ENCODE measurements at regions of chr17 and their contacts with region 1.

Region 1: DNA sequence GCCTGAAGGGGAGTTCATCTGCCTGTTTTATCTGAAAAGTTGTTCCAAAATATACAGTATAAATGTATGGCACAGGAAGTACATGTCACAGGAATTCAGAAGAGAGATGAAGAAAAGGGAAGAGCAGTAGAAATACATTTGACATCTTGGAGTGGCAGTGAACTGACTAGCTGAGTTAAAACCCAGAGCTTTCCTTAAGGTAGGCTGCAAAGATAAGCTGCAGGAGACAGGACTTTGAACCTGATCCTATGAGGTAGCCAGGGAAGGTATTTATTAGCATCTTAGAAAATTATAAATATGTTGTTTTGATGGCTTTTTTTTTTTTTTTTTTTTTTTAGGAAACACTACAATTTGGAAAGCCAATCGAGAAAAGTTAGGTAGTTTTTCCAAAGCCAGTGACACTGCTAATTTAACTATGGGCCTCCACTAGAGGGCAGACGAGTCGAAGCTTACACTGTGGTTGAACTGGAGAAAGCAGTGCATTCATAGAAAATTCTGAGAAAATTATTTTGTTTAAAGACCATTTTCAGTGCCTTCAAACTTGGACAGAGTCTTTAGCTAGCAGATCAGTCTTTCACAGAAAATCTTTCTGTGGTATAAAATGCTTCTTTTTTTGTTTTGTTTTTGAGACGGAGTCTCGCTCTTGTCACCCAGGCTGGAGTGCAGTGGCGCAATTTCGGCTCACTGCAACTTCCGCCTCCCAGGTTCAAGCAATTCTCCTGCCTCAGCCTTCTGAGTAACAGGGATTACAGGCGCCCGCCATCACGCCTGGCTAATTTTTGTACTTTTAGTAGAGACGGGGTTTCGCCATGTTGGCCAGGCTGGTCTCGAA is 122.3 kb downstream of the SSH2 start:
- DNase-seq: peak in 1 of 2 donors; percentile 64
- H3K4me3 ChIP-seq: no peak overlapping the region
- H3K27ac ChIP-seq: no peak overlapping the region
- H3K4me1 ChIP-seq: no peaks in the 10 kb centered on the region
- H3K27me3 ChIP-seq: no peaks in the 10 kb centered on the region
- CTCF ChIP-seq: peak; percentile 65 to 77

Region 2: GRCh38 chr17:29710891-29711418 is 96.8 kb before region 1 on chr17:
- intact Hi-C with region 1: no loop called
- DNase-seq: peak in 1 of 2 donors; percentile 28
- H3K4me3 ChIP-seq: no peak overlapping the region
- H3K27ac ChIP-seq: peak overlapping the region in 1 of 2 donors; percentile 19
- H3K4me1 ChIP-seq: peaks cover 0 to 19% (median 4%) of the 10 kb centered on the region in 4 donors
- H3K27me3 ChIP-seq: no peaks in the 10 kb centered on the region
- CTCF ChIP-seq: no peak

Region 3: DNA sequence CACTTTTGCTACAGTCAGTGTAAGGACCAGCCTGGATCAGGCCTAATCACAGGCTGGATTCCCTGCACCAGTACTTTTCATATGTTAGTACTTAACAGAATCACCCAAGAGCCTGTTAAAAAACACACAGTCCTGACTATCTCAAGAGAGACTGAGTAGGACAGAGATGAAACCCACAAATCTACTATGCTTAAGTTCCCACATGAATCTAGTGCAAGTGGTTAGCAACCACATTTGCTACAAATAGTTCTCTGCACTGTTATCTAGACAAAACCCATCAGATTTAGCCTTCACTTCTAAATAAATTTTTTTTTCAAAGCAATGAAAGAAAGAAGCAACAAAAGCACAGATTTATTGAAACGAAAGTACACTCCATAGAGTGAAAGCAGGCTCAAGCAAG is 83.4 kb after region 1 on chr17:
- intact Hi-C with region 1: no loop called
- DNase-seq: no peak
- H3K4me3 ChIP-seq: no peak overlapping the region
- H3K27ac ChIP-seq: no peak overlapping the region
- H3K4me1 ChIP-seq: no peaks in the 10 kb centered on the region
- H3K27me3 ChIP-seq: no peaks in the 10 kb centered on the region
- CTCF ChIP-seq: no peak

Region 4: DNA sequence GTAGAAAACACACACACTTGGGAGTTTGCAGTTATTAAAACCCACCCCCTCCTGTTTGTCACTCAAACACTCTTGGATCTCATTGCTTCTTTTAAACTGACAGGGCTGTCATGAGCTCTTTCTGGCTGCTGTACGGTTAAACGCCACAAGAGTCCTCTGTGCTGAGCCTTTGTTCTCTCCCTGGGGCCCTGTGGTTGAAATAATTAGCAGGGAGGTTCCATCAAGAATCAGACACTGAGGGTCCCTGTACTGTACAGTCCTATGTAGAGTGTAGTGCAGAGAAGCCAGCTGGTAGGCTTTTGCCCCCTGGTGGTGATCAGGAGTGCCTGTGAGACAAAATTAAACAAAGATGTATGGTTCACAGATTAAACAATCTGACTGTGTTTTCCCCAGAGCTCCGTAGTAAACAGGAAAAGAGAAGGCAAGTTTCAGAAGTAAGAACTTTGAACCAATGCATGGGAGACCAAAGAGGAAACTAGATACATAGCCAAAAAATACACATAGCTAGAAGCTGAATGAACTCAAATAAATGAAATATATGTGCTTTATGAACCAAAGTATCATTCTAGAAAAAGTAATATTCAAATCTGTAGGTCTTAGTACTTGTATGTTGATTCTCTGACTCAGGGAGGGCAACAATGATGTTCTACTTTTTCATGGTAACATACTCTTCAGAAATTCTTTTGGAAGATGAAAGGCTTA is 123.6 kb after region 1 on chr17:
- intact Hi-C with region 1: loop called (anchors 5 kb)
- DNase-seq: peak; percentile 60 to 67
- H3K4me3 ChIP-seq: peak overlapping the region; percentile 77 to 98
- H3K27ac ChIP-seq: no peak overlapping the region
- H3K4me1 ChIP-seq: peaks cover 0 to 21% (median 13%) of the 10 kb centered on the region in 4 donors
- H3K27me3 ChIP-seq: no peaks in the 10 kb centered on the region
- CTCF ChIP-seq: peak; percentile 81 to 83

Measured in tibial artery (tissue), 4 donors.